GM12878 (cell line): ENCODE measurements at regions of chr9 and their contacts with region 1.

Region 1: GRCh38 chr9:98848450-98849149 is 41.1 kb downstream of the GALNT12 start:
- DNase-seq: peak; percentile 23
- ATAC-seq: peak; percentile 100
- H3K4me3 ChIP-seq: no peak overlapping the region
- H3K27ac ChIP-seq: no peak overlapping the region
- H3K4me1 ChIP-seq: no peaks in the 10 kb centered on the region
- H3K27me3 ChIP-seq: no peaks in the 10 kb centered on the region; a peak in 1 of 4 replicates
- CTCF ChIP-seq: peak; percentile 90 to 96 (median 94)
- EP300 ChIP-seq: no peak
- POLR2A ChIP-seq: no peak
- RAD21 ChIP-seq: peak; percentile 86

Region 2: DNA sequence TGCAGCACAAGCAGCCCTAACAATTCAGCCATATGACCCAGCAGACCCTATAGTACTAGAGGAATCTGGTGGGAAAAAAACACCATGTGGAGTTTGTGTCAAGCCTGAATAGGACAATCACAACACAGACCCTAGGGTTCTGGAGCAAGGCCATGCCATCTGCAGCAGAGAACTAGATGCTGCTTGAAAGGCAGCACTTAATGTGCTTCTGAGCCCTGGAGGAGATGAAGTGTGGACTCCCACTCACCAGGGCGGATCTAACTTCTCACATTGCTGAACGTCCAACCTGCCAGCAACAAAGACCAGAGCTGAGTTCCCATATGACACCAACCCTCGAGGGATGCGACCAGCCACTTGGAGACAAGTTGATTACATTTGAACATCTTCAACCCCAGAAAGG is 183.1 kb before region 1 on chr9:
- CTCF ChIA-PET with region 1: no interaction called
- POLR2A ChIA-PET with region 1: no interaction called
- RAD21 ChIA-PET with region 1: no interaction called
- SMC1A ChIA-PET with region 1: no interaction called
- in situ Hi-C with region 1: no loop called
- intact Hi-C with region 1: no loop called
- DNase-seq: no peak
- ATAC-seq: no peak
- H3K4me3 ChIP-seq: no peak overlapping the region
- H3K27ac ChIP-seq: no peak overlapping the region
- H3K4me1 ChIP-seq: no peaks in the 10 kb centered on the region
- H3K27me3 ChIP-seq: no peaks in the 10 kb centered on the region; a peak in 2 of 4 replicates
- CTCF ChIP-seq: no peak
- EP300 ChIP-seq: no peak
- POLR2A ChIP-seq: no peak
- RAD21 ChIP-seq: no peak

Region 3: DNA sequence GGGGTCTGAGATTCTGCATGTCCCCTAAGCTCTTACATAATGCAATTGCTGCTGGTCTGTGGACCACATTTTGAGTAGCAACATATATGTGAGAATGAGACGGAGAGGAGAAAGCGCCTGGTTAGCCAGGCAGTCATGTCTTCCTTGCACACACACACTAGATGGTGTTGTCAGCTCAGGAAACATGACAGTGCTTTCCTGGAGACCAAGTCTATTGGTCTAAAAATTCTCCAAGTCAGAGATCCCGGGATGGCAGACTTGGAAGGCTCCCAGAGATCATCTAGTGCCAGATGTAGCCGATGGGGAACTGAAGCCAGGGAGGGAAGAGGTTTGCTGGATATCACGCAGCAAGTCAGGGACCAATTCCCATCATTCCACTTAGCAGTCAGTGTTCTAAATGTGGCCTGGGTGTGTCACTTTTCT is 12.3 kb after region 1 on chr9:
- CTCF ChIA-PET with region 1: interaction called, 14 read pairs
- POLR2A ChIA-PET with region 1: no interaction called
- RAD21 ChIA-PET with region 1: no interaction called
- SMC1A ChIA-PET with region 1: interaction called, 4 read pairs
- in situ Hi-C with region 1: no loop called
- intact Hi-C with region 1: no loop called
- DNase-seq: no peak
- ATAC-seq: no peak
- H3K4me3 ChIP-seq: no peak overlapping the region
- H3K27ac ChIP-seq: no peak overlapping the region
- H3K4me1 ChIP-seq: no peaks in the 10 kb centered on the region
- H3K27me3 ChIP-seq: peaks cover 0 to 1% of the 10 kb centered on the region in 2 experiments; a peak in 1 of 4 replicates
- CTCF ChIP-seq: peak in 1 of 3 experiments; percentile 2; a peak in 1 of 6 replicates
- EP300 ChIP-seq: no peak
- POLR2A ChIP-seq: no peak
- RAD21 ChIP-seq: peak; percentile 29; the same call in 1 of the 2 replicates

Region 4: DNA sequence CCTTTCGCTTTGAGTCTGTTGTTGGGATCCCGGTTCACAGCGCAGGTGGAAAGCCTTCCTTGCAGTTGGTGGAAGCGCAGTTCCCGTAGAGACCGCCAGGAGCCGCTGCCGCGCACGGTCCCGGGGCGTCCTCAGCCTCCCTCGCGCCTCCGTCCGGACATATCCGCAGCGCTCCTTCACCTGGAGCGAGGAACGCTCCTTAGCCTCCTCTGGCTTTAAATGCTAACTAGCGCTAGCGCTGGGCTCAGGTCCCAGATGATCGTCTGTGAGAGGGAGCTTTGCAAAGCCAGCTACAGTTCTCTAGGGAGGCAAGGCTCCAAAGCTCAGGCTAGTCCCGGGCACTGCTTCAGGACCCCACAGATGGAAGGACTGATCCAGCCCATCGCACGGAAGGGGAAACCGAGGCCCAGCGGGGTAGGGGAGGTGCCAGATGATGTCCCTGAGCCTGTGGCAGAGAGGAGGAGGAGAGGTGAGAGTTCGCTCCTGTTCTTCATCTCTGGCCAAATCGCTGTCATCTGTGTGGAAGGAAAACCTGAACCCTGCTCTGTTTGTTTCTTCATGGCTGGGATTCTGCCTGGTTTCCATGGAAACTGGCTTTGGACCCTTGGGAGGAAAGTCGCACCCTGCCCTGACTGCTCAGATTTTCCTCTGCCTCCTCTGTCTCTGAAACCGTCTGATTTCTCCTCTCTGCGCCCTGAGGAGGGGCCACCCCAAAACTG is 126.6 kb after region 1 on chr9:
- CTCF ChIA-PET with region 1: interaction called, 8 read pairs
- POLR2A ChIA-PET with region 1: no interaction called
- RAD21 ChIA-PET with region 1: interaction called, 4 read pairs
- SMC1A ChIA-PET with region 1: interaction called, 3 read pairs
- in situ Hi-C with region 1: no loop called
- intact Hi-C with region 1: loop called (anchors 5 kb)
- DNase-seq: no peak
- ATAC-seq: peak; percentile 97
- H3K4me3 ChIP-seq: no peak overlapping the region
- H3K27ac ChIP-seq: no peak overlapping the region
- H3K4me1 ChIP-seq: no peaks in the 10 kb centered on the region; the same call in 1 of the 2 replicates
- H3K27me3 ChIP-seq: peaks cover 7% of the 10 kb centered on the region in 2 experiments
- CTCF ChIP-seq: peak; percentile 98 to 99 (median 98); a peak in 5 of 6 replicates
- EP300 ChIP-seq: no peak
- POLR2A ChIP-seq: no peak
- RAD21 ChIP-seq: peak; percentile 78

Region 5: GRCh38 chr9:99244344-99245260 is 396.0 kb after region 1 on chr9:
- CTCF ChIA-PET with region 1: no interaction called
- POLR2A ChIA-PET with region 1: no interaction called
- RAD21 ChIA-PET with region 1: no interaction called
- SMC1A ChIA-PET with region 1: no interaction called
- in situ Hi-C with region 1: no loop called
- intact Hi-C with region 1: no loop called
- DNase-seq: peak; percentile 68
- ATAC-seq: peak; percentile 96
- H3K4me3 ChIP-seq: no peak overlapping the region
- H3K27ac ChIP-seq: peak overlapping the region; percentile 94
- H3K4me1 ChIP-seq: peaks cover 31% of the 10 kb centered on the region
- H3K27me3 ChIP-seq: no peaks in the 10 kb centered on the region
- CTCF ChIP-seq: no peak
- EP300 ChIP-seq: peak; percentile 84 to 96
- POLR2A ChIP-seq: no peak
- RAD21 ChIP-seq: no peak